ENCODE measurements at regions of chr2 and their contacts with region 1.

Region 1: DNA sequence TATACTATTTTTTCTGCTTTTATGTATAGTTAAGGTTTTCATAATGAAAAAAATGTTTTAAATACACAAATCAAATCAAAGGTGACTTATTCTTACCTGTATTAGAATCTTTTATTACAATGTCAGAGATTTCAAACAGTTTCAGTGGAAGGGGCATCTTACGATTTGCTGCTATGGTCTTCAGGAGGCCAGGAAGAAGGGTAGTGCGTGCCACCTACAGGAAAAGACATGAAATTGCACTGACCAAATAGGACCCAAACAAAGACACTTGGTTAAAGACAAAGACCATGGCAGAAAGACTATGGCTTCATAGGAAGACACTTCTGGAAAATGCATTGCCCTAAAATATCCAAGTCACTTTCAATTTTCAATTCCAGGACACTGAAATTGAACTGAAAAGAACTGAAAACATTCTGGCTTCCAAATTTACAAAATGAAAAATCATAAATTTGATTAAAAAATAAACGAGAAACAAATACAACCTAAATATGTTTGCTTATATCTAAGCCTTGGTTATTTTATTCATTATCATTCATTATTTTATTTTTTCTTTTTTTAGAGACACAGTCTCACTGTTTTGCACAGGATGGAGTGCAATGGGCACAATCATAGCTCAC is 42.1 kb downstream of the FARSB start:
- DNase-seq: peak; percentile 15
- ATAC-seq: peak; percentile 55
- H3K4me3 Mint-ChIP-seq: no peak overlapping the region
- H3K27ac Mint-ChIP-seq: no peak overlapping the region
- H3K4me1 Mint-ChIP-seq: peaks cover 5% of the 10 kb centered on the region
- H3K27me3 Mint-ChIP-seq: no peaks in the 10 kb centered on the region

Region 2: GRCh38 chr2:222598611-222599010 is 15.2 kb before region 1 on chr2:
- CTCF ChIA-PET with region 1: interaction called, 10 read pairs
- POLR2A ChIA-PET with region 1: no interaction called
- intact Hi-C with region 1: no loop called
- DNase-seq: no peak
- ATAC-seq: no peak
- H3K4me3 Mint-ChIP-seq: no peak overlapping the region
- H3K27ac Mint-ChIP-seq: no peak overlapping the region
- H3K4me1 Mint-ChIP-seq: no peaks in the 10 kb centered on the region
- H3K27me3 Mint-ChIP-seq: no peaks in the 10 kb centered on the region